ENCODE measurements at regions of chr1 and their contacts with region 1.

Region 1: DNA sequence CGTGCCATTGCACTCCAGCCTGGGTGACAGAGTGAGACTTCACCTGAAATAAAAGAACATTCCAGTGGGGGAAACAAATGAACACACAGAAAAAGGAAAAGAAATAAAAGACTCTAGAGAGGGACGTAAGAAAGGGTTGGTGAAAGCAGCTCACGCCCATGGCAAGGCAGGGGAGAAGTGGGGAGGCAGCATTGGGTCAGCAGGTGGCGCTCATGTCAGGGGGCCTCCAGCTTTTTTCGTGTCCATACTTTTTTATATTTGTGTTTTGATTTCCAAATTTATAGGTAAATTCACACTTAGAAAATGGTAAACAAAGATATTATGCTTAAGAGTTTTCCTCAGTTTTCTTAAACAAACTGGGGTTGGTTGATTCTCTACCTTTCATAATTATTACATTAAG is 45.5 kb downstream of the VPS13D start:
- DNase-seq: peak; percentile 5 to 75
- H3K4me3 ChIP-seq: no peak overlapping the region
- H3K27ac ChIP-seq: no peak overlapping the region
- H3K4me1 ChIP-seq: peaks cover 0 to 5% (median 0%) of the 10 kb centered on the region in 4 experiments; a peak in 1 of 7 replicates
- H3K27me3 ChIP-seq: no peaks in the 10 kb centered on the region
- CTCF ChIP-seq: peak; percentile 68 to 91 (median 81)
- EP300 ChIP-seq: no peak
- POLR2A ChIP-seq: no peak
- RAD21 ChIP-seq: peak; percentile 39

Region 2: DNA sequence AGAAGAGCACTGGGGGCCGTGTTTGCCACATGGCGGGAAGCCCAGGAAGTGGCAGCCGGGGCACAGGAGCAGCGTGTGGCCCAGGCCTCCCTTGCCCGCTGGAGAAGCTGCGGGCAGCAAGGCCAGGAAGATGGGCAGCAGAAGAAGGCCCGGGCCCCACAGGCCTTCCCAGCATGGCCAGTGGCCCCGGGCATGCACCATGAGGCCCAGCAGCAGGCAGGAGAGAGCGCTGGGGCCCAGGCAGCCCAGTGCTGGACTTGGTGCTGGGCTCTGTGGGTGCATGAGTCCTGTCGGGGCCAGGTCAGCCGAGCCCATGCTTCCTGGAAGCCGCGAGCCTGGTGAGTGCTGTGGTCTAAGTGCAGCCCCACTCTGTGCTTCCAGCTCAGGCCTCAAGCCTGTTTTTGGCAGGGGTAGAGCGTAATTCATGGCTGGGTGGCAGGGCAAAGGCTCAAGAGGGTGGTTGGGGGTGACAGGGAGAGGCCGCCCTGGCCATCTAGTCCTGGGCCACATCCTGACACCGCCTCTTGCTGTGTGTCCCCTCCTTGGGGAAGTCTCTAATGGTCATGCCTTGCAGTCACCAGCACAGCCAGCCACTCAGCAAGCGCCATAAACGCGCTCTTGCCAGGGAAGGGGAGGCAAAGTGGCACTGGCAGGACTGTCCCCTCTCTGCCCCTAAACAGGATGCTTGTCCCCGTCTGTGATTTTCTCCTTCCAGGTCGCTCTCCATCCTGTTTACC is 490.9 kb before region 1 on chr1:
- CTCF ChIA-PET with region 1: no interaction called
- POLR2A ChIA-PET with region 1: no interaction called
- DNase-seq: peak in 1 of 2 experiments; percentile 64
- H3K4me3 ChIP-seq: peak overlapping the region in 1 of 4 experiments; percentile 34; a peak in 2 of 8 replicates
- H3K27ac ChIP-seq: no peak overlapping the region
- H3K4me1 ChIP-seq: peaks cover 7 to 34% (median 25%) of the 10 kb centered on the region in 4 experiments
- H3K27me3 ChIP-seq: no peaks in the 10 kb centered on the region
- CTCF ChIP-seq: no peak
- EP300 ChIP-seq: no peak
- POLR2A ChIP-seq: no peak
- RAD21 ChIP-seq: no peak

Region 3: GRCh38 chr1:12244078-12244477 is 31.3 kb before region 1 on chr1:
- CTCF ChIA-PET with region 1: interaction called, 11 read pairs
- POLR2A ChIA-PET with region 1: no interaction called
- DNase-seq: peak in 1 of 2 experiments; percentile 46
- H3K4me3 ChIP-seq: no peak overlapping the region
- H3K27ac ChIP-seq: no peak overlapping the region
- H3K4me1 ChIP-seq: peaks cover 0 to 19% (median 6%) of the 10 kb centered on the region in 4 experiments; a peak in 5 of 7 replicates
- H3K27me3 ChIP-seq: no peaks in the 10 kb centered on the region
- CTCF ChIP-seq: peak in 2 of 3 experiments; percentile 49 to 63; a peak in 3 of 4 replicates
- EP300 ChIP-seq: no peak
- POLR2A ChIP-seq: no peak
- RAD21 ChIP-seq: peak; percentile 15 to 40; a peak in 2 of 4 replicates

Region 4: DNA sequence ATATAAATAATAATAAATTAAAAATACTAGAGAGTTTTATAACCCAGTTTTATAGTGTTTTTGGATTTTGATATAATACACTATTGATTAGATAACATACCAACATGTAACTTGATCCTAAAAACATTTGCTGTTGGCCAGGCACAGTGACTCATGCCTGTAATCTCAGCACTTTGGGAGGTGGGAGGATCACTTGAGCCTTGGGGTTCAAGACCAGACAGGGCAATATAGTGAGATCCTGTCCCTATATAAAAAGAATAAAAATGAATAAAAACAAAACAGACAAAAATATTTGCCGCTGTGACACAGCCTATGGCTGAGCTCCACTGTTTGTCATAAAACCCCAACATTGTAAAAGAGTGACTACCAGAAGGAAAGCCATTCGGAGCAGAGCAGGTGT is 19.5 kb before region 1 on chr1:
- CTCF ChIA-PET with region 1: interaction called, 26 read pairs
- POLR2A ChIA-PET with region 1: no interaction called
- DNase-seq: no peak
- H3K4me3 ChIP-seq: no peak overlapping the region
- H3K27ac ChIP-seq: no peak overlapping the region
- H3K4me1 ChIP-seq: no peaks in the 10 kb centered on the region
- H3K27me3 ChIP-seq: no peaks in the 10 kb centered on the region
- CTCF ChIP-seq: no peak
- EP300 ChIP-seq: no peak
- POLR2A ChIP-seq: no peak
- RAD21 ChIP-seq: no peak

Region 5: DNA sequence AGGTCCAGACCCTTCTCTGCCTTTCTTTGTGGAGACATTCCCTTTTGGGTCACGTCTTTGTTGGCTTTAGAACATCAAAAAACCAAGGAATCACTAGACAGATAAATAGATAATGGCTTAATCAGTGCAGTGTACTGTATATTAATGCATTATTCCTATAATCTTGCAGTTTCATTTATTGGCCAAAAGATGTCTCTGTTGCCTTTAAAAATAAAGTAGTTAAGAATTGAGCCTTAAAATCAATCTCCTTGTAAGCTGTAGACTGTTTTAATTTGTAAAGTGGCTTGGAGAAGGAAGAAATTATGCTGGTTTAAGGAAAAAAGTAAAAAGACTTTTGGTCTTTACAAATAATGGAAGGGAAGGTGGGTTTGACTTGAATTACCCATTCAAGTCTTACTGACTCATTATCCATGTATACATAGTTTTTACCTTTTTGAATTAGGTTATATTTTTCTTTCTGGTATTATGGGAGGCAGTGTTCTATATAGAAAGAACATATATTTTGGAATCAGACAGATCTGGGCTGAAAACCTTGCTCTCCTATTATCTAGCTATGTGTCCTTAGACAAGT is 39.0 kb after region 1 on chr1:
- CTCF ChIA-PET with region 1: interaction called, 31 read pairs
- POLR2A ChIA-PET with region 1: no interaction called
- DNase-seq: no peak
- H3K4me3 ChIP-seq: no peak overlapping the region
- H3K27ac ChIP-seq: no peak overlapping the region
- H3K4me1 ChIP-seq: 0 out of 7 replicates have a peak, but pooled peaks cover 0 to 2% (median 0%) of the 10 kb centered on the region in 4 experiments
- H3K27me3 ChIP-seq: no peaks in the 10 kb centered on the region
- CTCF ChIP-seq: peak in 1 of 3 experiments; percentile 28; a peak in 1 of 4 replicates
- EP300 ChIP-seq: no peak
- POLR2A ChIP-seq: no peak
- RAD21 ChIP-seq: peak in 1 of 2 experiments; percentile 28; a peak in 3 of 4 replicates

Region 6: GRCh38 chr1:12619792-12620487 is 344.6 kb after region 1 on chr1:
- CTCF ChIA-PET with region 1: interaction called, 11 read pairs
- POLR2A ChIA-PET with region 1: interaction called, 3 read pairs
- DNase-seq: peak in 1 of 2 experiments; percentile 93
- H3K4me3 ChIP-seq: peak overlapping the region; percentile 81 to 97 (median 90)
- H3K27ac ChIP-seq: no peak overlapping the region
- H3K4me1 ChIP-seq: peaks cover 4 to 24% (median 12%) of the 10 kb centered on the region in 4 experiments; a peak in 6 of 7 replicates
- H3K27me3 ChIP-seq: no peaks in the 10 kb centered on the region; a peak in 1 of 7 replicates
- CTCF ChIP-seq: peak in 2 of 3 experiments; percentile 94 to 95; a peak in 3 of 4 replicates
- EP300 ChIP-seq: no peak
- POLR2A ChIP-seq: no peak
- RAD21 ChIP-seq: peak; percentile 98 to 99